Mammary epithelial cell (primary cell): ENCODE measurements at regions of chr14 and their contacts with region 1.

Region 1: DNA sequence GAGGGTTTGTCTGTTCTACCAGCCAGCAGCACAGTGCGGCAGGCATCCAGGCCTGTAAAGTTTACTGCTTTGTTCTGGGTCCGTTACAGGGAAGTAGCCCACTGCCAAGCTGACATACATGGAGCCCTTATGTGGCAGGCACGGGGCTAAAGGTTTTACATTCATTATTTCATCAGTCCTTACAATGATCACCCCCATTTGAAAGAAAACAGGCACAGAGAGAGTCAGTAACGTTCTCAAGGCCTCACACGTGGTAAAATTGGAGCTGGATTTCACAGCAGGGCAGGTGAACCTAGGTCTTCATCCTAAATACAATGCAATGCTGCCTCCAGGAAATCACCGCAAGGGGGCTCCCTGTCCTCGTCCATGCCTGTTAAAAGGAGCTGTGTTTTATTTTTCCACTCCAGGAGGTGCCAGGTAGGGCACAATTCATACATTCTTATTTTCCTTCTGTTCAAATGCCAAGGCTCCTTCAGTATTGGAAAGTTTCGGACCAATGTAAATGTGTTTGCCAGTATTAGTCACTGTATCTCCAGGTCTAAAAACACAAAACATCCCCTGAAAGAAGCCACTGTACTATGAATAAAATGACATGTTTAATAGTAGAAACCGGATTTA is 172.2 kb upstream of the GZMB start:
- DNase-seq: peak; percentile 54
- H3K4me3 ChIP-seq: no peak overlapping the region
- H3K27ac ChIP-seq: no peak overlapping the region
- H3K4me1 ChIP-seq: no peaks in the 10 kb centered on the region
- H3K27me3 ChIP-seq: no peaks in the 10 kb centered on the region
- CTCF ChIP-seq: peak; percentile 78 to 79

Region 2: GRCh38 chr14:24734878-24735500 is 71.2 kb before region 1 on chr14:
- CTCF ChIA-PET with region 1: no interaction called
- dilution Hi-C with region 1: no loop called
- in situ Hi-C with region 1: no loop called
- intact Hi-C with region 1: loop called (anchors 10 kb)
- DNase-seq: peak; percentile 54
- H3K4me3 ChIP-seq: no peak overlapping the region
- H3K27ac ChIP-seq: no peak overlapping the region
- H3K4me1 ChIP-seq: no peaks in the 10 kb centered on the region
- H3K27me3 ChIP-seq: no peaks in the 10 kb centered on the region
- CTCF ChIP-seq: peak; percentile 47 to 70

Region 3: GRCh38 chr14:24774187-24774915 is 31.8 kb before region 1 on chr14:
- CTCF ChIA-PET with region 1: no interaction called
- dilution Hi-C with region 1: no loop called
- in situ Hi-C with region 1: no loop called
- intact Hi-C with region 1: no loop called
- DNase-seq: no peak
- H3K4me3 ChIP-seq: no peak overlapping the region
- H3K27ac ChIP-seq: no peak overlapping the region
- H3K4me1 ChIP-seq: no peaks in the 10 kb centered on the region
- H3K27me3 ChIP-seq: no peaks in the 10 kb centered on the region
- CTCF ChIP-seq: no peak

Region 4: DNA sequence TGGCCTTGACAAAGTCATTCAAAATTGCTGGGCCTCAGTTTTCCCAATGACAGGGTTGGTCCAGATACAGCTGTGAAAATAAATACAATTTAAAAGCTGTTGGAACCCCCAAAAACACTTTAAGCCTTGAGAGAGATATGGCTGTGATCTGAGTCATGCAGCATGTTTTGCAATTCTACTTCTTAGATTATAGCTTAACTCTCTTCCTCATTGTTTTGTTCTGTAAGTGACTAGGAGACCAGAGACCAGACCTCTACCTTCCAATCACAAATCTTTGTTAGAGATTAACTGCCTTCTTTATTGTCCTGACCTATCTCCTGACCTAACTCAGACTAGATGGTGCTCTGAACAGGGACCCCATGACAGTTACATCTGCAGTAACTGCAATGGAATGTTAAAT is 45.7 kb after region 1 on chr14:
- CTCF ChIA-PET with region 1: no interaction called
- dilution Hi-C with region 1: no loop called
- in situ Hi-C with region 1: no loop called
- intact Hi-C with region 1: no loop called
- DNase-seq: no peak
- H3K4me3 ChIP-seq: no peak overlapping the region
- H3K27ac ChIP-seq: no peak overlapping the region
- H3K4me1 ChIP-seq: no peaks in the 10 kb centered on the region
- H3K27me3 ChIP-seq: no peaks in the 10 kb centered on the region
- CTCF ChIP-seq: no peak

Region 5: DNA sequence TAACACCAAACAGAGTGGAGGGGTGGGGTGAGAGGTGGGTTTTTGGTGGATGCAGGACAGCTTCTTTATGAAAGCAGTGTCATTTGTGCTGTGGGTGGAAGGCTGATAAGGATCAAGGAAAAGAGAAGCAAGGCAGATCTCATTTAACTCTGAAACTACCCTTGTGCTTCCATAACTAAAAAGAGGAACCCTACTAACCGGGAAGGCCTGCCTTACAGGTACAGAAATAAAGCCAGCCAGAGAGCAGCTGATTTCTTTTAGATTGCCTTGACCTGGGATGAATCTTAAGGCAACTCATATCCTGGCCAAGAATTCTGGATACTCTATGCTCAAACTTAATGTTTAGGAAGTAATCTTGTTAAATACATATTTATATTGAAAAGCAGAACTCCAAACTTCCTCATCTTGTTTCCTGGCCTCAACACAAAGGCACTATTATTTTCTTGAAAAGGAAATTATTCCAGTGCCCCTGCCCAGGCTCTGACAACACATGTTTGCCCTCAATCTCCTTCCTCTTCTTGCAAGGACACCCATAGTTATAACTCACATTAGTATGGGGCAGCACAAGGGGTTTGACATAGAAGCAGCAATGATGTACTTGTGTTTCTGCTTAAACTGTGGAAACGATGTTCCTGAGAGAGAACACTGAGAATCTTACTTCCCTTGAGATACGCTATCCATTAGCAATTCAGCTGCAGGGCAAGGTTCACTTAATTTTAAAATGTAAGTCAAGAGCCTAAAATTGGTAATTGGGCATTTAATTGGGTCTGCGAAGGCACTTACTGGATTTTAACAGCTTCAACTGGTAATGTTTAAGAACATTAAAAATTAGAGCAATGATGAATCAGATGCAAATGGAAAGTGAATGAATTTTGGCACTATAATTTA is 70.1 kb after region 1 on chr14:
- CTCF ChIA-PET with region 1: no interaction called
- dilution Hi-C with region 1: no loop called
- in situ Hi-C with region 1: no loop called
- intact Hi-C with region 1: no loop called
- DNase-seq: no peak
- H3K4me3 ChIP-seq: no peak overlapping the region
- H3K27ac ChIP-seq: no peak overlapping the region
- H3K4me1 ChIP-seq: no peaks in the 10 kb centered on the region
- H3K27me3 ChIP-seq: no peaks in the 10 kb centered on the region
- CTCF ChIP-seq: no peak

Region 6: GRCh38 chr14:25042362-25043299 is 236.5 kb after region 1 on chr14:
- CTCF ChIA-PET with region 1: interaction called, 6 read pairs
- dilution Hi-C with region 1: no loop called
- in situ Hi-C with region 1: no loop called
- intact Hi-C with region 1: loop called (anchors 2 kb)
- DNase-seq: no peak
- H3K4me3 ChIP-seq: no peak overlapping the region
- H3K27ac ChIP-seq: no peak overlapping the region
- H3K4me1 ChIP-seq: no peaks in the 10 kb centered on the region
- H3K27me3 ChIP-seq: no peaks in the 10 kb centered on the region
- CTCF ChIP-seq: no peak

Region 7: DNA sequence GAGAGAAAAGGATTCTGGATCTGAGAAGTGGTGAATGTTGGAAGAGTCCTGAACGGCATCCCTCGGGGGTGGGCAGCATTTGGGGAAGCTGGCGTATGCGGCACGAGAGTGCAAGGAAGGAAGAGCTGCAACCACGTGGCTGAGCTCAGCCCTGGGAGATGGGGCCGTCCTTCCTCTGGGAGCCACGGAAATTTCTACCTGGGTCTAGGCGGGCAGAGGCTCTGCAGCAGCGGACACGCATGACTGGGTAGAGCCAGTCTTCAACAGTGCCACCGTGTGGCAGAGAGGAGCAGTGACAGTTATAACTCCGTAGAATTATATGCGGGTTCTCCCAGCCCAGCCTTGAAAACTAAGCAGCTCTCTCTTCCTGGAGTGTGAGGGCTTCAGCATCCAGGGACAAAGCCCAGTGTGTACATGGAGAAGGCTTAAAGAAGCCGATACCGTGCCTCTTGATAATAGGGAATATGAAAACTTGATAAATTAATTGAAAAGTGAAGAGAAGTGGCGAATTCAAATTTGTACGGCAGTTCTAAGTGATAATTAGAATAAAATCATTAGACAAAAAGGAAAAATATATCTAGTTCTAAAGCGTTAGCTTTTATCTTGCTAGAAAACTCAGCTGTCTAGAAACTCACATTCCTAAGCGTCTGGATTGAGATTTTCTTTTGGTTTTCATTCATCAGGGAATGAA is 326.7 kb after region 1 on chr14:
- CTCF ChIA-PET with region 1: interaction called, 5 read pairs
- dilution Hi-C with region 1: no loop called
- in situ Hi-C with region 1: loop called in 1 of 2 experiments (anchors 25 kb)
- intact Hi-C with region 1: loop called (anchors 1 kb)
- DNase-seq: peak; percentile 53
- H3K4me3 ChIP-seq: no peak overlapping the region
- H3K27ac ChIP-seq: no peak overlapping the region
- H3K4me1 ChIP-seq: no peaks in the 10 kb centered on the region
- H3K27me3 ChIP-seq: no peaks in the 10 kb centered on the region
- CTCF ChIP-seq: peak; percentile 51 to 76

Region 8: DNA sequence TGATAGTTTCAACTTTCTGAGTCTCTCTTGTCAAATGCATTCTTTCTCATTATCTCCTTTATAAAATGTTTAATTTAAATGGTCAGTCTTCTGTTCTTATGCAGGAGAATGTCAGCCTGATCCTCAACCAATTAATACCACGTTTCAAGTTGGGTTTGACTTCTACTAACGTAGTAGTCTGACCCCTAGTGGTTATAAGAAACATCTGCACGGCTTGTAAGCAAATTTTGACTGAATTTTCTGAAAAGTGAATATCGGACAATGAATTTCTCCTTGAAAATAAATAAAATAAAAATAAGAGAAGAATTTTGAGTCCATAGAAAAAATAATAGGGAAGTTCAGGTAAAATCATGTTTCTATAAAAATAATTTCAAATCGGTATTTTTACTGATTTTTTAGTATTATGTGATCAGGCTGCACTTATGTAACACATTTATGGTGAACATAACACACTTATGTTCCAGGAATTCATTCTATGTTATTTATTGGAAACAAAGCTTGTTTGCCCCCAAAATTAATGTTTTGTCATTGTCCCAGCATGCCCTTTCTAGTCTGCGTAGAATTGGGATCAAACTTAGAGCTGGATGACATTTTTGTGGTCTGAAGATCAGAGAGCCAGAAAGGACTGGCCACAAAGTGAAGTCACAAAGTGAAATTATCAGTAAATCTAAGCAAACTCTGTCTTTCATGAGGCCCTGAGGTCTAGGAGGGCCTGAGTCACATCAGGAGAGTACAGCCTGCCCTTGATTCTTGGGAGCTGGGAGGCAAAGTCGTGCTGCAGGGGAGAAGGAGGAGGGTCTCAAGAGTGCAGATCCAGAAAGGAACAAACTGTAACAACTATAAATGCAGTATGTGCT is 345.0 kb after region 1 on chr14:
- CTCF ChIA-PET with region 1: no interaction called
- dilution Hi-C with region 1: no loop called
- in situ Hi-C with region 1: loop called (anchors 10 to 25 kb)
- intact Hi-C with region 1: loop called (anchors 1 kb)
- DNase-seq: peak; percentile 32
- H3K4me3 ChIP-seq: no peak overlapping the region
- H3K27ac ChIP-seq: no peak overlapping the region
- H3K4me1 ChIP-seq: peaks cover 8% of the 10 kb centered on the region
- H3K27me3 ChIP-seq: no peaks in the 10 kb centered on the region
- CTCF ChIP-seq: peak; percentile 63 to 73

Region 9: GRCh38 chr14:25501749-25502148 is 695.6 kb after region 1 on chr14:
- CTCF ChIA-PET with region 1: no interaction called
- dilution Hi-C with region 1: no loop called
- in situ Hi-C with region 1: no loop called
- intact Hi-C with region 1: no loop called
- DNase-seq: no peak
- H3K4me3 ChIP-seq: no peak overlapping the region
- H3K27ac ChIP-seq: no peak overlapping the region
- H3K4me1 ChIP-seq: no peaks in the 10 kb centered on the region
- H3K27me3 ChIP-seq: no peaks in the 10 kb centered on the region
- CTCF ChIP-seq: no peak